A549 (cell line): ENCODE measurements at regions of chr20 and their contacts with region 1.

Region 1: DNA sequence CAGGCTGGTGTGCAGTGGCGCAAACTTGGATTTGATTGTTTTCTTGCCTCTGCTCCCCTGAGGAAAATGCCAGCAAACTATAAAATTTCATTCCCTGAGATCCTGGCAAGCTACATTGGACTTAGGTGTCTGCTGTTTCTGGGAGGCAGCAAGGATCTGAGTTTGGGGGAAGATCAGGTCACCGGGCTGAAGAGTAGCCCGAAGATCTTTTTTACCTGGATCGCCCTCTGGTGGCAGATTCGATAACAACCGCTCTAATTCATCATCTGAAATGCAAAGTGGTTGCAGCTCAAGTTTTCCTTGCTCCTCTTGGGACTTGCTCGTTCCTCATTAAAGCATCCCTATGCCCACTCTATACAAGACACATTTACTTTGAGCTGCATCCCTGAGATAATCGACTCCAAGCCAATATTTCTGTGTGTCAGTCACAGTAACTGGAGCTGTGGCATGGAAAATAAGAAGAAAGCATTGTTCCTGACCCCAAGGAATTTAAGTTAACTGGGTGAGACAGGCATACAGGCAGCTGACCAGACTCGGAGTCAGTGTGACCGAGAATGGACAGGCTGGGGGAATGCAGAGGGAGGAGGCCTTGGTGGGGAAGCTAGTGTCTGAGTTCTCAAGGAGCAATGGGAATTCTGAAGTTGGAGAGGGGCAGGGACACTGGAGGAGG is 131.8 kb upstream of the PROKR2 start:
- DNase-seq: peak; percentile 61 to 70
- ATAC-seq: peak; percentile 81 to 92
- H3K4me3 ChIP-seq: no peak overlapping the region
- H3K27ac ChIP-seq: no peak overlapping the region
- H3K4me1 ChIP-seq: no peaks in the 10 kb centered on the region
- CTCF ChIP-seq: peak; percentile 86
- EP300 ChIP-seq: no peak
- POLR2A ChIP-seq: no peak
- RAD21 ChIP-seq: peak; percentile 75 to 80

Region 2: DNA sequence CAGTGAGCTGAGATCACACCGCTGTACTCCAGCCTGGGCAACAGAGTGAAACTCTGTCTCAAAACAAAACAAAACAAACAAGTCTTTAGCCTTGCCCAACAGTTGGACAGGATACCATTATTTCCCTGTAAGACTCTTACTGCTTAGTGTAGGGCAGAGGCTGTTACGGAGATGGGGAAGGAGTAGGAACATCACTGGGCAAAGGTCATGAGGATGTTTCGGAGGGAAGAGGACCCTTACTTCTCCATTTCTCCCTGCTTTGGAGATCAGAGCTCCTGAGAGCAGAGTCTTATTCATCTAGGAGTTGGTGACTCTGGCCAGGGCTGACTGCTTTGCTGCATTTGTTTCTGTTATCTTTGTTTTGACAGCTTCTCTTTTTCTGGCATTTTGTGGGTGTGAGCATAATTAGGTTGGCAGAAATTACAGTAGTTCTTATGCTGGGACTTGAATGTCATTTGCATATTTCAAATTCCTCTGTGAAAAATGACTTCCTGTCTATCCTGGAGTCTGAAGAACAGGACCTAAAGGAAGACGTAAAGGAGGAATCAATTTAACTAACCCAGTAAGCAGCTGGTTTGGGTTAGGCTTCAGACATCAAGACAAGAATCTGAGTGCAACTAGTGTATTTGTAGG is 232.8 kb before region 1 on chr20:
- CTCF ChIA-PET with region 1: interaction called, 35 read pairs
- POLR2A ChIA-PET with region 1: no interaction called
- DNase-seq: no peak
- ATAC-seq: no peak
- H3K4me3 ChIP-seq: no peak overlapping the region
- H3K27ac ChIP-seq: no peak overlapping the region
- H3K4me1 ChIP-seq: no peaks in the 10 kb centered on the region
- CTCF ChIP-seq: no peak
- EP300 ChIP-seq: no peak
- POLR2A ChIP-seq: no peak
- RAD21 ChIP-seq: no peak

Region 3: DNA sequence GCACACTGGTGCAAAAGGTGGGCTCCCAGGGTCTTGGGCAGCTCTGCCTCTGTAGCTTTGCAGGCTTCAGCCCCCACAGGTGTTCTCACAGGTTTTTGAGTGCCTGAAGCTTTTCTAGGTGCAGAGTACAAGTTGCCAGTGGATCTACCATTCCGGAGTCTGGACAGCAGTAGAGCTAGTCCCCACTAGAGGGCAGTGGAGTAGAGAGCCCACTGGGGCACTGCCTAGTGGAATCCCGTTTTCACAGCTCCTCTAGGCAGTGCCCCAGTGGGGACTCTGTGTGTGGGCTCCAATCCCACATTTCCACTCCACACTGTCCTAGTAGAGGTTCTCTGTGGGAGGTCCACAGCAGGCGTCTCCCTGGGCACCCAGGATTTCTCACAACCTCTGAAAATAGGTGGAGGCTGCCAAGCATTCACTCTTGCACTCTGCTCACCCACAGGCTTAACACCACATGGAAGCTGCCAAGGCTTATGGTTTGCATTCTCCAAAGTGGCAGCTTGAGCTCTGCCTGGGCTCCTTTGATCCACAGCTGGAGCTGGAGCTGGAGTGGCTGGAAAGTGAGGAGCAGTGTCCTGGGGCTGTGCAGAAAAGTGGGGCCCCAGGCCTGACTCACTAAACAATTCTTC is 45.6 kb before region 1 on chr20:
- CTCF ChIA-PET with region 1: interaction called, 39 read pairs
- POLR2A ChIA-PET with region 1: no interaction called
- DNase-seq: peak; percentile 53 to 55
- ATAC-seq: peak; percentile 80 to 99
- H3K4me3 ChIP-seq: no peak overlapping the region
- H3K27ac ChIP-seq: no peak overlapping the region
- H3K4me1 ChIP-seq: no peaks in the 10 kb centered on the region
- CTCF ChIP-seq: peak; percentile 55
- EP300 ChIP-seq: no peak
- POLR2A ChIP-seq: no peak
- RAD21 ChIP-seq: peak; percentile 40 to 59; a peak in 4 of 5 replicates

Region 4: GRCh38 chr20:5430670-5431069 is 17.9 kb before region 1 on chr20:
- CTCF ChIA-PET with region 1: interaction called, 45 read pairs
- POLR2A ChIA-PET with region 1: no interaction called
- DNase-seq: no peak
- ATAC-seq: no peak
- H3K4me3 ChIP-seq: no peak overlapping the region
- H3K27ac ChIP-seq: no peak overlapping the region
- H3K4me1 ChIP-seq: no peaks in the 10 kb centered on the region
- CTCF ChIP-seq: no peak
- EP300 ChIP-seq: no peak
- POLR2A ChIP-seq: no peak
- RAD21 ChIP-seq: no peak

Region 5: GRCh38 chr20:5469111-5469510 is 20.5 kb after region 1 on chr20:
- CTCF ChIA-PET with region 1: interaction called, 25 read pairs
- POLR2A ChIA-PET with region 1: no interaction called
- DNase-seq: no peak
- ATAC-seq: no peak
- H3K4me3 ChIP-seq: no peak overlapping the region
- H3K27ac ChIP-seq: no peak overlapping the region
- H3K4me1 ChIP-seq: no peaks in the 10 kb centered on the region
- CTCF ChIP-seq: no peak
- EP300 ChIP-seq: no peak
- POLR2A ChIP-seq: no peak
- RAD21 ChIP-seq: no peak

Region 6: GRCh38 chr20:5513975-5514516 is 65.5 kb after region 1 on chr20:
- CTCF ChIA-PET with region 1: no interaction called
- POLR2A ChIA-PET with region 1: no interaction called
- DNase-seq: peak; percentile 84 to 88
- ATAC-seq: peak; percentile 95 to 97
- H3K4me3 ChIP-seq: no peak overlapping the region
- H3K27ac ChIP-seq: peak overlapping the region; percentile 72 to 78
- H3K4me1 ChIP-seq: peaks cover 15% of the 10 kb centered on the region
- CTCF ChIP-seq: no peak
- EP300 ChIP-seq: no peak; a peak in 1 of 5 replicates
- POLR2A ChIP-seq: no peak
- RAD21 ChIP-seq: no peak

Region 7: DNA sequence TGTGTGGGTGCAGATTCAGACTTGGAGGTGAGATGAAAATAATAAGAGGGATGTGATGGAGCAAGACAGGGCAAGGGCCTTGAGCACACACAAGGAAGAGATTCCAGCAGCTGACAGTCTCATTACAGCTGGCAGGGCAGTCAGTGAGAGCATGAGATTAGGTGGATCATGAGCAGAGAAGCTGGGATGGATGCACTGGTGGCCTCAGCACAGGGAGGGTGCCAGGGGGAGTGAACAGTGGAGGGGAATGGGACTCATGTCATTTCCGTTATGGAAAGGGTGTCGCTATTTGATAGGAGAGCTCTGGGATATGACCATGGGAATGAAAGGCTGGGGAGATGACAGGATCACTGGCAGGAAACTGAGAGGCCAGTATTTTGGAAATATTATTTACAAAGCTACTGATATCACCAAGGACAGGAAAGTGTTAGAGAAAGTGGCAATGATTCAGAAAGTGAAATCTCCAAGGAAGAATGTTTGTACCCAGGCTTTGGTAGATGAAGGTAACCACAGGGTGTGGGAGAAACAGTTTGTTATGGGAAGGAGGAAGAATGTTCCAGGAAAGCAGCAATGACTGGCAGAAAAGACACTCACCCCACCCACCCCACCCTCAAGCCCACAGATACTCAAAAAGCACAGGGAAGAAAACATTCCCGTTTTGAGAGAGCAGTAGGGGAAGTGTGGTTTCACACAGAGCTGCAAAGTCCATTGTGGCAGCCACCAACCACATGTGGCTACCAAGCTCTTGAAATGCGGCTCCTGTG is 82.9 kb after region 1 on chr20:
- CTCF ChIA-PET with region 1: no interaction called
- POLR2A ChIA-PET with region 1: no interaction called
- DNase-seq: peak in 1 of 2 experiments; percentile 24
- ATAC-seq: no peak
- H3K4me3 ChIP-seq: no peak overlapping the region
- H3K27ac ChIP-seq: peak overlapping the region; percentile 24 to 52; a peak in 5 of 6 replicates
- H3K4me1 ChIP-seq: peaks cover 28% of the 10 kb centered on the region
- CTCF ChIP-seq: no peak
- EP300 ChIP-seq: no peak
- POLR2A ChIP-seq: no peak
- RAD21 ChIP-seq: no peak

Region 8: DNA sequence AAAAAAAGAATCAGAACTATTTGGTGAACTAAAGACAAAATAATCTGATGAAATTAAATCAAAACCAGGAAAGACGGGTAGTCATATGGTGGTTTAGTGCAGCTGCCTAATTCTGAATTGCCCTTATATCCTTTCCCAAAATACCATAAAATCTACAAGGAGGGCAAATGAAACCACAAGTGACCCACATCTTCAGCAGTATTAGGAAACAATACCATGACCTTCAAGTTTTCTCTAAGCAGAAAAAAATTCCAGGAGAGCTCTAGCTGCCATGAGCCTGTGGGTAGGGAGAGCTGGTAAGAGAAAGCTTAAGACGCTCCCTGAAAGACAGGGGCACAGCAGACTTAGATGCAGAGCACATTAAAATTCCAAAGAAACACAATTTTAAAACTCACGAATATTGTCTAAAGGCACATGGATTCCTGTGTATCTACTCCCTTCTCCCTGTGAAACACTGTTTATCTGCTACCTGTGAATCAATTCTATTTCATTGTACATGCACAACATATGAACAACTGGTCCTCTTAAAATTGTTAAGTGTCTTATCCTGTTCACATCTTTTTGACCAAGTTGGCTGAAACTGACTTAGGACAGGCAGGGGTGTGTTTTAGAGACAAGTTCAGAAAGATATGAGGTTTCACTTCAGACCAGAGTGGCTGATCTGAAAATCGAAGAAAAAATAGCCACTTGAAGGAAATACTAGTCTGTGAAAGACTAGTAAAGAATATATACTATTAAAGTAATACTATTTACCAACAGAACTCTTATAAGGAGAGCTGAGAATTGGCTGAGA is 148.0 kb after region 1 on chr20:
- CTCF ChIA-PET with region 1: no interaction called
- POLR2A ChIA-PET with region 1: no interaction called
- DNase-seq: no peak
- ATAC-seq: no peak
- H3K4me3 ChIP-seq: no peak overlapping the region
- H3K27ac ChIP-seq: no peak overlapping the region
- H3K4me1 ChIP-seq: no peaks in the 10 kb centered on the region
- CTCF ChIP-seq: no peak
- EP300 ChIP-seq: no peak
- POLR2A ChIP-seq: no peak
- RAD21 ChIP-seq: no peak